Colonic mucosa (tissue), 4 donors: ENCODE measurements at regions of chr14 and their contacts with region 1.

Region 1: DNA sequence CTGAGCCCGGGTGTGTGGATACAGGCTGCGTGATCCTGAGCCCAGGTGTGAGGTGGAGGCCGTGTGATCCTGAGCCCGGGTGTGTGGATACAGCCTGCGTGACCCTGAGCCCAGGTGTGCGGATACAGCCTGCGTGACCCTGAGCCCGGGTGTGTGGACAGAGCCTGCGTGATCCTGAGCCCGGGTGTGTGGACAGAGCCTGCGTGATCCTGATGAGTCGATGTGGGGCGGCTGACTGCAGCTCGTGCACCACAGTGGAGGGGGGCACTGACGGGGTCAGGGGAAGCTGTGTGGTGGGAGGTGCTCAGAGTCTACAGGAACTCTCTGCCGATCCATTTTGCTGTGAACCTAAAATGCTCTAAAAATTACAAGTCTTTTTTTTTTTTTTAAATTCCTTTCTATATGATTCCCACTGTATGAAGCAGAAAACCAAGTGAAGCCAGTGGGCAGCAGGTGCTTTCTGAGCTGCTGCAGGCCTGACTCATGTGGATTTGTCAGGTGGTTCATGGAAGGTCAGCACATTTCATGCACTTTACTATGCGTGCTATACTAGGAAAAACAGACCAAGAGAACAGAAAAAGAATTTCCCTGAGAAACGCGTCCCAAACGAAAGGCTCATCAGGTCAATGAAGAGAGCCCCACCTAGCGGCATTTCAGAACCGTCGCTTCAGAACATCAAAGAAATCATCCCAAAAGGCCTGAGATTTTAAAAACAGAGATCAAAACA is 19.3 kb downstream of the BRF1 start:
- DNase-seq: no peak
- H3K4me3 ChIP-seq: no peak overlapping the region
- H3K27ac ChIP-seq: no peak overlapping the region
- H3K4me1 ChIP-seq: no peaks in the 10 kb centered on the region
- H3K27me3 ChIP-seq: no peaks in the 10 kb centered on the region
- CTCF ChIP-seq: peak; percentile 42

Region 2: DNA sequence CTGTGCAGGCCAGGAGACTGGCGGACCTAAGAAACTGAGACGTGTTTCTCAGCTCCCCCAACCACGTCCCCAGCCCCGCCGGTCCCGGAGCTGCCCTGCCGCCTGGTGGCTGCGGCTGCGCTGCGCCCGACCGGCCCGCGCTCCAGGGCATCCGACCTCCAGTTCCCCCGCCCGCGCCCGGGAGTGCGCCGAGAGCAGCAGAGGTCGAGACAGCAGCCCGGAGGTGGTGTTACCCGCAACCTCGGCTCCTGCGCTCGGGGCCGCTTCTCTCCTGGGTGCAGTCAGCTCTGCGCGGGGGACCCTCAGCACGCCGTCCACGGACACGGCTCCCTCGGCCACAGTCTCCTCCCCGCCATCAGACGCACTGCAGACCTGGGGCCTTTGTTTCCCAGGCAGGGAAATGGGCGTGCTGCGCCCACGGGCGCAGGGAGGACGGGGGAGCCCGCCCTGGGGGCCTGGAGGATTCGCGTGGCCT is 194.7 kb before region 1 on chr14:
- intact Hi-C with region 1: loop called (anchors 10 kb)
- DNase-seq: peak; percentile 76
- H3K4me3 ChIP-seq: peak overlapping the region; percentile 25
- H3K27ac ChIP-seq: no peak overlapping the region
- H3K4me1 ChIP-seq: peaks cover 17% of the 10 kb centered on the region
- H3K27me3 ChIP-seq: peaks cover 21% of the 10 kb centered on the region
- CTCF ChIP-seq: peak; percentile 83

Region 3: DNA sequence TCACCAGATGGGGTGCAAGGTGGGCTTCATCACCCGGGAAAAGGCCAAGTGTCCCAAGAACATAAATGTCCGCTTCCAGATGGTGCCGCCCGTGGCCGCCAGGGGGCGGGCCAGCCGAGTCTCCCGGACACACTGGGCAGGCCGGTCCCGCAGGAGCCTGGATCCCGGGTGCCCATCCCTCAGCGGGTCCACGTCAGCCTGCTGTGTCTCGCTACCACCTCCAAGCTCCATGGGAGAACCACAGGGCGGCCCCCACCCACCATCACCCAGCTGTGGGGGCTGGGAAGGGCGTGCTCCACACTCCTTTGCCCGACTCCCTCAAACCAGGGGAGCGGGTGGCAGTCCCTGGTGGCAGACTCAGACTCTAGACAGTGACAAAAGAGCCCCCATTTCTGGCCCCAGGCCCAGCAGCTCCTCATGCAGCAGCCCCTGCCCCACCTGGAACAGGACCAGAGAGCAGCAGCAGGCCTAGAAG is 78.4 kb before region 1 on chr14:
- intact Hi-C with region 1: loop called (anchors 2 kb)
- DNase-seq: peak; percentile 76
- H3K4me3 ChIP-seq: no peak overlapping the region
- H3K27ac ChIP-seq: no peak overlapping the region
- H3K4me1 ChIP-seq: peaks cover 5% of the 10 kb centered on the region
- H3K27me3 ChIP-seq: peaks cover 18% of the 10 kb centered on the region
- CTCF ChIP-seq: peak; percentile 92

Region 4: GRCh38 chr14:105330491-105330895 is 49.0 kb after region 1 on chr14:
- intact Hi-C with region 1: no loop called
- DNase-seq: no peak
- H3K4me3 ChIP-seq: no peak overlapping the region
- H3K27ac ChIP-seq: no peak overlapping the region
- H3K4me1 ChIP-seq: no peaks in the 10 kb centered on the region
- H3K27me3 ChIP-seq: no peaks in the 10 kb centered on the region
- CTCF ChIP-seq: no peak

Region 5: GRCh38 chr14:105351920-105352851 is 70.7 kb after region 1 on chr14:
- intact Hi-C with region 1: loop called (anchors 10 kb)
- DNase-seq: peak; percentile 90
- H3K4me3 ChIP-seq: no peak overlapping the region
- H3K27ac ChIP-seq: no peak overlapping the region
- H3K4me1 ChIP-seq: no peaks in the 10 kb centered on the region
- H3K27me3 ChIP-seq: no peaks in the 10 kb centered on the region
- CTCF ChIP-seq: peak; percentile 71